HAP-1 (cell line): ENCODE measurements at regions of chr3 and their contacts with region 1.

Region 1: DNA sequence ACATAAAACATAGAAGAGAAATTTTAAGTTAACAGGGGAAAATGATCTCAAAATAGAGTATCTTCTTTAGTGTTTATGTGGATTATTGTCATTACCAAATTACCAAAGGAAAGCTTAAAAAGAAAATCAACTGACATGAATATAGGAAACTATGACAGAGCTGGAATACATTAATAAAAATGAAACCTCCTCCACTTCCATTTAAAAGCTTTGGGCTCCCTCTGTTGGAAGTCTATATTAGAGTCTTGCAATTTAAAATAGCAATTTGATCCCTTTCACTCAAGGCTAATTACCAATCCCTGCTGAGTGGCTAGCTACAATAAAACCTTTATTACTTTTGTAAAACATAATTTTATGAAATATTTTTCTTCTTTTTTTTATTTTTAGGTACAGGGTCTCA is 61.4 kb upstream of the IMPG2 start:
- DNase-seq: peak in 1 of 2 experiments; percentile 56
- H3K4me3 ChIP-seq: no peak overlapping the region
- H3K4me1 ChIP-seq: no peaks in the 10 kb centered on the region
- H3K27me3 ChIP-seq: no peaks in the 10 kb centered on the region

Region 2: DNA sequence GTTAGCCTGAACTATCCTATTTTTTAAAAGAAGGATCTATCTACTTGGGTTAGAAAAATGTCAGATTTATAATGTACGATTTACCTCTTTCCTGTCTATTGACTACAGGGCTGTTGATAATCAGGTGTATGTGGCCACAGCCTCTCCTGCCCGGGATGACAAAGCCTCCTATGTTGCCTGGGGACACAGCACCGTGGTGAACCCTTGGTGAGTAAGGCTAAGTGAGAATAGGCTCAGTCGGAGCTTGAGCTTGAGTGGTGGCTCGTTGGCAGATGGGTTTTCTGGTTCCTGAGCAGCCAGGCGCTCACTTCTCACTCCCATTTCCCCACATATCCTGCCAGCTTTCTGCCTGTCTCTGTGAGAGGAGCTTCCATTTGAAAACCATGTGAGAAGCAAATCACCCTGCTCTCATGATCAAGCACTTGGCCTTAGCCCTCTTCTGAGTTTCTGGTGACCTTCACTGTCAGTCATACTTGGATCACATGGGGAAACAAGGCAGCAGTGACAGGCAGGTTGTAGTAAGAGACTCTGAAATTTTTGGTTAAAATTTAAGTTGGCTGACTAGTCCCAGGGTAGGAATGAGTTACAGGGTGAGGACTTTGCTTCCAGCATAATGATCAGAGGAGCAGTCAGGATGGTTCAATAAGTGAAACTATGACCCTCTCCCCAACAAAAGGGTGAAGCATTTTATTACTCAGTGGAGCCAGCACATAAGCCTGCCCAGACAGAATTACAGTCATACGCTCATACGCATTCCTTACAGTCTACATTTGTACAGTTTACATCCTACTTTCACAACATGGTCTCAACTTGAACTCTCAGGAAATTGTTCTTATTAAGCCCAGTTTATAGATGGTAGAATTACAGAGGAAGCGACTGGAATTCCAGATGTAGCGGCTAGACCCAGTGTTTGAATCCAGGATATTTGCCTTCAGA is 1029.2 kb before region 1 on chr3:
- in situ Hi-C with region 1: no loop called
- DNase-seq: no peak
- H3K4me3 ChIP-seq: no peak overlapping the region
- H3K4me1 ChIP-seq: no peaks in the 10 kb centered on the region
- H3K27me3 ChIP-seq: no peaks in the 10 kb centered on the region

Region 3: GRCh38 chr3:101069901-101070798 is 311.7 kb before region 1 on chr3:
- in situ Hi-C with region 1: loop called (anchors 25 kb)
- DNase-seq: peak; percentile 9 to 82
- H3K4me3 ChIP-seq: no peak overlapping the region
- H3K4me1 ChIP-seq: no peaks in the 10 kb centered on the region
- H3K27me3 ChIP-seq: no peaks in the 10 kb centered on the region

Region 4: GRCh38 chr3:101518421-101518871 is 136.6 kb after region 1 on chr3:
- in situ Hi-C with region 1: no loop called
- DNase-seq: no peak
- H3K4me3 ChIP-seq: no peak overlapping the region
- H3K4me1 ChIP-seq: peaks cover 13% of the 10 kb centered on the region
- H3K27me3 ChIP-seq: peaks cover 12% of the 10 kb centered on the region